ENCODE measurements at regions of chr6 and their contacts with region 1.

Region 1: GRCh38 chr6:108578595-108579327 is 18.0 kb downstream of the FOXO3 start:
- DNase-seq: no peak
- ATAC-seq: no peak
- H3K4me3 ChIP-seq: no peak overlapping the region
- H3K4me3 Mint-ChIP-seq: no peak overlapping the region
- H3K27ac ChIP-seq: no peak overlapping the region
- H3K27ac Mint-ChIP-seq: no peak overlapping the region
- H3K4me1 ChIP-seq: peaks cover 18 to 25% of the 10 kb centered on the region in 2 donors
- H3K4me1 Mint-ChIP-seq: peaks cover 70% of the 10 kb centered on the region
- H3K27me3 ChIP-seq: no peaks in the 10 kb centered on the region
- H3K27me3 Mint-ChIP-seq: no peaks in the 10 kb centered on the region
- CTCF ChIP-seq: no peak

Region 2: DNA sequence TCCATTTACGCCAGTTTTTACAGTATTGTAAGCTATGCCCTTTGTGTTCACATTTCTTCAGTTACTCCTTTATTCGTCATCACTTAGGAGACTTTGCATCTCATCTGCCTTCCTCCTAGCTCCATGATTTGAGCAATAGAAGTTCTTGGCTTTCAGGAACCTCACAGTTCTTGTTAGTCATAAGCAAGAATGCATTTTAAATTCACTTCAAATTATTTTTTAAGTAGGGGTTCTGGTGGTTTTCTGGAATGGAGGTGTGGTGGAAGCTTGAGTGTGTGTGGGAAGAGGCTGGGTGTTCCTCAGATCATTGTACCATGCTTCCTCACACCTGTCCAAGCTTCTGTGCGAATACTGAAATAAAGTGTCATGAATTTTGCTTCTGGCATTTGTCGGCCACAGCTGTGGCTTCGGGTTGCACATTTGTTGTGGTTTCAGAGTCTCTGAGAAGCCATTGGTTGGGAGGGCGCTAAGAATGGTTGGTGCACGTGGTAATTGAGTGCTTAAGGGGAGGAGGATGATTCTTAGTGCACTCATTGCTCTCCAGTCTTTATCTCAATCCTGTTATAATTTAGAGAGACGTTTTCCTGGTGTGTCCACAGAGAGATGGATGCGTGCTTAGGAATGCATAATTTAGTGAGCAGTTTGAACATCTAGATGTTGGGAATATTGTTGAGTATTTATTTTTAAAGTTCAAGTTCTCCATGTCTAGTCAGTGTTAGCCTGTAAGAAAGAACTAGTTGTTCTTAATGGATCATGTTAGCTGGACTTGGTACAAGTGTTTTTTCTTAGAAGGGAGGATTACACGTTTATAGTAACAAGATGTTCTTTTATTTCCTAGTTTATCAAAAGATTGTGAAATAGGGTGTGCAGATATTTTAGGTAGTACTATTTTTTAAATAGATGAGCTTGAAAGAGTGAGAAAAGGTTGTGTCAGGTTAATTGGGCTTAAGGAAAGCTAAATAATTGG is 13.9 kb after region 1 on chr6:
- CTCF ChIA-PET with region 1: no interaction called
- POLR2A ChIA-PET with region 1: interaction called, 4 read pairs
- intact Hi-C with region 1: loop called (anchors 2 kb)
- DNase-seq: peak; percentile 70
- ATAC-seq: peak; percentile 80
- H3K4me3 ChIP-seq: no peak overlapping the region
- H3K4me3 Mint-ChIP-seq: peak overlapping the region; percentile 28
- H3K27ac ChIP-seq: peak overlapping the region; percentile 40 to 46
- H3K27ac Mint-ChIP-seq: peak overlapping the region; percentile 74
- H3K4me1 ChIP-seq: peaks cover 49 to 62% of the 10 kb centered on the region in 2 donors
- H3K4me1 Mint-ChIP-seq: peaks cover 82% of the 10 kb centered on the region
- H3K27me3 ChIP-seq: no peaks in the 10 kb centered on the region
- H3K27me3 Mint-ChIP-seq: no peaks in the 10 kb centered on the region
- CTCF ChIP-seq: no peak

Region 3: GRCh38 chr6:108610270-108610839 is 31.6 kb after region 1 on chr6:
- CTCF ChIA-PET with region 1: no interaction called
- POLR2A ChIA-PET with region 1: no interaction called
- intact Hi-C with region 1: loop called (anchors 5 kb)
- DNase-seq: no peak
- ATAC-seq: no peak
- H3K4me3 ChIP-seq: no peak overlapping the region
- H3K4me3 Mint-ChIP-seq: no peak overlapping the region
- H3K27ac ChIP-seq: no peak overlapping the region
- H3K27ac Mint-ChIP-seq: no peak overlapping the region
- H3K4me1 ChIP-seq: no peaks in the 10 kb centered on the region
- H3K4me1 Mint-ChIP-seq: peaks cover 26% of the 10 kb centered on the region
- H3K27me3 ChIP-seq: no peaks in the 10 kb centered on the region
- H3K27me3 Mint-ChIP-seq: no peaks in the 10 kb centered on the region
- CTCF ChIP-seq: no peak